ENCODE measurements at regions of chr17 and their contacts with region 1.

Region 1: DNA sequence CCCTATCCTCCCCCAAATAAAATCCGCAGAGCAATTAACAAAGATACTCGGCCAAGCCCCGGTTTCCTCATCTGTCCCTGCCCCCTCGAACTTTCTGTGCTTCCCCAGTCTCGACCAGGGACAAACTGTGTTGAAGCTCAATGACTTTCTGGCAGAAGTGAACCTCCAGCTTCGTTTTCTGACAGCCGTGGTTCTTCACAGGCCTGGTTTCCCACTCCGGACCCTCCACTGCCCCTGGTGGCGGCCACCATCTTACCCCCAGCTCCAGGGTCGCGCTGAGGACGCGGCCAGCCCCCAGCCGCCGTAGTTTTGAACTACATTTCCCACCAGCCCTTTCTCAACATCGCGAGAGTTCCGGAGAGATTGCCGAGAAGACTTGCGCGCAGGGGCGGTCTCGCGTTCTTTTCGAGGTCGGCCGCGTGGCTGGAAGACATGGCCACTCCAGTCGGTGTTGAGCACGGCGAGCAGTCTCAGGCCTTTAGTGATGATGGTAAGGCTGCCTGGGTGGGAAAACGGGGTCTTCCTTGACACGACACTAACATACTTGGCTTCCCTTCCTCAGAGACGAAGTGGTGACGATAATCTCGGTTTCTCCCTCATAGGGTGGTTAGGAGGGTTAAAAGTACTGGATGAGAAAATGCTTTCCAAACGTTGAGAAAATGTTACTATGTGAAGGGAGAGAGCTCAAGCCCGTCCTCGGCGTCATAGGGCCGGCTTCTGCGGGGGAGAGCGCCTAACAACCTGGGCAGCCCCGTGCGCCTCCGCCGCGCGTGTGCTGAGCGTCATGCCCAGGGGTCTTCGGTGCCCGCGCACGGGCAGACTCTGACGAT is 17.7 kb downstream of the PRCD start:
- DNase-seq: peak; percentile 98
- ATAC-seq: peak; percentile 95
- H3K4me3 ChIP-seq: peak overlapping the region; percentile 79 to 89 (median 86)
- H3K27ac ChIP-seq: peak overlapping the region; percentile 90
- H3K4me1 ChIP-seq: peaks cover 67% of the 10 kb centered on the region
- H3K27me3 ChIP-seq: no peaks in the 10 kb centered on the region; a peak in 1 of 5 replicates
- CTCF ChIP-seq: peak; percentile 88
- EP300 ChIP-seq: peak in 1 of 2 experiments; percentile 11; a peak in 1 of 4 replicates
- POLR2A ChIP-seq: peak; percentile 99 to 100
- RAD21 ChIP-seq: peak; percentile 64

Region 2: GRCh38 chr17:76523084-76524037 is 34.2 kb before region 1 on chr17:
- CTCF ChIA-PET with region 1: interaction called, 11 read pairs
- POLR2A ChIA-PET with region 1: interaction called, 50 read pairs
- in situ Hi-C with region 1: loop called (anchors 5 kb)
- intact Hi-C with region 1: no loop called
- DNase-seq: peak; percentile 53
- ATAC-seq: peak; percentile 58
- H3K4me3 ChIP-seq: peak overlapping the region in 1 of 3 experiments; percentile 64; a peak in 2 of 6 replicates
- H3K27ac ChIP-seq: no peak overlapping the region
- H3K4me1 ChIP-seq: peaks cover 85% of the 10 kb centered on the region
- H3K27me3 ChIP-seq: peaks cover 8 to 32% of the 10 kb centered on the region in 2 experiments
- CTCF ChIP-seq: peak; percentile 100
- EP300 ChIP-seq: no peak; a peak in 1 of 4 replicates
- POLR2A ChIP-seq: no peak
- RAD21 ChIP-seq: peak; percentile 100

Region 3: DNA sequence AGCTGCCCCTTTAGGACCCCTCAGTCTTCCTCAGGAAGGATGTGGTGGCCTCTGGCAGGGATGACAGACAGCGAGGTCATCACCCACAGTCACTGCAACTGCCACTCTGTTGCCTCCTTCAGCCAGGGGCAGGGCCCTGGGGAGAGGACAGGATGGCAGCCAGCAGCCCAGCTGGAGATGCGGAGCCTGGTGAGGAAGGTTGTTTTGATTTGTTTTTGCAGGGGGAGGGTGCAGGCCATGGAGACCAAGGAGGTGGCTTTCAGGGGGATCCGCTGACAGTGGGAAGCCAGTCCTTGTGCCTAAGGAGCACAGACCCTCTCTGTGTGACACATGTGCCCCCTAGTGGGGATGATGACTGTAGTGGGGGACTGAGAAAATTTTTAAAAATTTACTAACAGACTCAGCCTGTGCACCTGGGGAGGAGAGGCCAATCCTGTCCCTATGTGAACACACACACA is 10.4 kb before region 1 on chr17:
- CTCF ChIA-PET with region 1: no interaction called
- POLR2A ChIA-PET with region 1: interaction called, 16 read pairs
- in situ Hi-C with region 1: no loop called
- intact Hi-C with region 1: no loop called
- DNase-seq: peak; percentile 74
- ATAC-seq: peak; percentile 73
- H3K4me3 ChIP-seq: peak overlapping the region in 1 of 3 experiments; percentile 66; a peak in 1 of 6 replicates
- H3K27ac ChIP-seq: no peak overlapping the region
- H3K4me1 ChIP-seq: peaks cover 62% of the 10 kb centered on the region
- H3K27me3 ChIP-seq: no peaks in the 10 kb centered on the region
- CTCF ChIP-seq: peak; percentile 95
- EP300 ChIP-seq: no peak
- POLR2A ChIP-seq: no peak
- RAD21 ChIP-seq: peak; percentile 97

Region 4: DNA sequence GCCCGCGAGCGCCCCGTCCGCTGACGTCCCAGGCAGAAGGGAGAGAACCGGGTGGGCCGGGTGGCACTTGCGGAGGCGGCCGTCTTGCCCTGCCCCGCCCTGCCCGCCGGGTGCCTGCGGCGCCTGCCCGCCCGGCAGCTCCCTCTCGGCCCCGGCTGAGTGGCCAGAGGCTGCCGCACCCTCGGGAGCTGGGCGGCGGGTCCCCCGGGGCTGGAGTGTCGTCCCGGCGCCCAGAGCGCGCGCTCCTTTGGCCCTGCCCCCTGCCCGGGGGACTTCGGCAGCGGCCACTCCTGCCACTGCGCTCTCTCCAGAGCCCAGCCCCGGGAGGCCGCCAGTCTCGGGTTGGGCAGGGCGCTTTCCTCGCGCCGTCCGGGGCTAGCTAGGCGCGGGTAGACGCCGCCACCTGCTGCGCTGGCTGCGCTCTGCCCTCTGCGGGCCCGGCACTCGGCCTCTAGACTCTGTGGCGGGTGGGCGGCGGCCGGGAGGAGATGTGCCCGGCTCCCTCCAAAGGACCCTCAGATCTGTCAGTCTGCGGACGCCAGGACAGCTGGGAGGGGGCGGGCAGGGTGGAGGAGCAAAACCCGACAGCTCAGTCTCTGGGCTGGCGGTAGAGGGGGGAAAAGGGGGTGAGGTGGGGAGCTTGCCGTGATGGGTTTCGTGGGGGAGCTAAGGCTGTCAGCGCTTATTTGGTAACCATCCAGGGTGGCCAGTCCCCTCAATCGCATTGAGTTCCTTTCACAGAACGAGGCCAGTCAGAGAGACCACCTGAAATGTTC is 28.4 kb after region 1 on chr17 and contains the start of gene ST6GALNAC2:
- CTCF ChIA-PET with region 1: interaction called, 3 read pairs
- POLR2A ChIA-PET with region 1: interaction called, 19 read pairs
- in situ Hi-C with region 1: no loop called
- intact Hi-C with region 1: loop called (anchors 5 kb)
- DNase-seq: peak; percentile 66
- ATAC-seq: peak; percentile 93
- H3K4me3 ChIP-seq: peak within 1 kb of the TSS; percentile 55 to 72 (median 58)
- H3K27ac ChIP-seq: no peak within 1 kb of the TSS
- H3K4me1 ChIP-seq: peaks cover 53% of the 10 kb centered on the region
- H3K27me3 ChIP-seq: peaks cover 11 to 40% of the 10 kb centered on the region in 2 experiments; a peak in 4 of 5 replicates
- CTCF ChIP-seq: peak; percentile 90
- EP300 ChIP-seq: no peak
- POLR2A ChIP-seq: no peak
- RAD21 ChIP-seq: peak; percentile 98
- total RNA-seq, gene ST6GALNAC2: 0.49 and 0.84 TPM in 2 replicates

Region 5: DNA sequence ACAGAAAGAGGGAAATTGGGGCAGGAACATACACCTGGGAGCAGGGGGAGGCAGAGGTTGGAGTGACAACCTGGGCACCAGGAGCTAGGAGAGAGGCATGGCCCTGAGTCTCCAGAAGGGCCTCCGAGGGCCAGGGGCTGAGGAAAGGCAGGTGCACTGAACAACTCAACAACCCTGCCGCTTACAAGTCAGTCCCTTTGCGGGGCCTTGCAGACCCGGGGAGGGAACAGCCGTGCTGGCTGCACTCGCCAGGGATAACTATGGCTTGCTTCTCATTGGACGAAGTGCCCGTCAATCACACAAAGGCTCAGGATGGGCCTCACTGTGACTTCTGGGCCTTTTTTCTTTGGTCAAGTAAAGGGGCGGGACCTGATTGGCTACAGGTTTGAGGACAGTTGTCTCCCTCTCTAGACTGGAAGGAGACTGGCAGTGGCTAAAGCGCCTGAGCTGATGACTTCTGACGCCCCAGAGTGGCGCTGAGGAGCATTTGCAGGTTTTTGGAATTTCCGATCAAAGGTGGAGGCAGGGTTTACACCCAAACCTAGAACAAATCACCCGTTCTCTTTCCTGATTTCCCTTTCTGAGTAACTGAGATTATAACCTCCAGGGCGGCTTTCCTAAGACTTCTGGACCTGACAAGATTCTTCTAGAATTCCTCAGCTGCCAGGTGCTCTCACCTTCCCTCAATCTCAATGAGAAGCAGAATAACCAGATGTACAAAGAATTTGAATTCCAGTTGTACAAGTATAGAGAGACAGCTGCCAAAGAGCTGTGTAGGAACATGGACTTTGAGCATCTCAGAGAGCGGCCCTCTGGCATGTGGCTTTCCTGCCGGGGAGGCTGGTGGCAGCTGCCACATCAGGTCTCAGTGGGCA is 55.6 kb after region 1 on chr17:
- CTCF ChIA-PET with region 1: no interaction called
- POLR2A ChIA-PET with region 1: interaction called, 32 read pairs
- in situ Hi-C with region 1: no loop called
- intact Hi-C with region 1: loop called (anchors 5 kb)
- DNase-seq: peak; percentile 94
- ATAC-seq: peak; percentile 95
- H3K4me3 ChIP-seq: peak overlapping the region; percentile 17 to 70 (median 32)
- H3K27ac ChIP-seq: peak overlapping the region; percentile 57
- H3K4me1 ChIP-seq: peaks cover 34% of the 10 kb centered on the region
- H3K27me3 ChIP-seq: peaks cover 0 to 6% of the 10 kb centered on the region in 2 experiments; a peak in 1 of 5 replicates
- CTCF ChIP-seq: peak; percentile 71
- EP300 ChIP-seq: no peak
- POLR2A ChIP-seq: no peak
- RAD21 ChIP-seq: peak; percentile 57

Region 6: DNA sequence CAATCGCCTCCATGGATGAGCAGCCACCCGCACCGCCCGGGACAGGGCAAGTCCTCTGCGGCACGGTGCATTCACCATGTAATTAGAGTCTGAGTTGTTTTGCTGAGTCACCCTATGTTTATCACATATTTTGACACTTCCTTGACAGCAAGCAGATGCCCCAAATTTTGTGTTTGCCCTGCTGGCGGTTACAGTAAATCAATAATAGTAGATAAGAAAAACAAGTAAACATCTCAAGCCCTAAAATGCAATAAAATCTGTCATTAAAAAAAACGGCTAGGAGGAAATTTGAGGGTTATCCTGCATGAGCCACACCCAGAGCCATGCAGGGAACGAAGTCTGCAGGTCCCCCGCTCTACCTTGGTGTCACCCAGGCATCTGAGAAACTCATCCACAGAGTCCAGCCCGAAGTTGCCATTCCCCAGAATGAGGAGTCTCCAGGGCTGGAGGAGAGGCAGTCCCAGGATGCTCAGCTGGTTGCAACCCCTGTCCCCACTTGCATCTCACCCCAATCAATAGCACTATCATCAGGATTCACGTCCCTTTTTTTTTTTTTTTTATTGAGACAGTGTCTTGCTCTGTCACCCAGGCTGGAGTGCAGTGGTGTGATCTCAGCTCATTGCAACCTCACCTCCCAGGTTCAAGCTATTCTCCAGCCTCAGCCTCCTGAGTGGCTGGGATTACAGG is 102.5 kb after region 1 on chr17:
- CTCF ChIA-PET with region 1: no interaction called
- POLR2A ChIA-PET with region 1: no interaction called
- in situ Hi-C with region 1: no loop called
- intact Hi-C with region 1: no loop called
- DNase-seq: no peak
- ATAC-seq: peak; percentile 76
- H3K4me3 ChIP-seq: peak overlapping the region in 2 of 3 experiments; percentile 5 to 16; a peak in 2 of 6 replicates
- H3K27ac ChIP-seq: no peak overlapping the region
- H3K4me1 ChIP-seq: peaks cover 61% of the 10 kb centered on the region
- H3K27me3 ChIP-seq: no peaks in the 10 kb centered on the region
- CTCF ChIP-seq: no peak
- EP300 ChIP-seq: no peak
- POLR2A ChIP-seq: no peak
- RAD21 ChIP-seq: no peak

Region 7: DNA sequence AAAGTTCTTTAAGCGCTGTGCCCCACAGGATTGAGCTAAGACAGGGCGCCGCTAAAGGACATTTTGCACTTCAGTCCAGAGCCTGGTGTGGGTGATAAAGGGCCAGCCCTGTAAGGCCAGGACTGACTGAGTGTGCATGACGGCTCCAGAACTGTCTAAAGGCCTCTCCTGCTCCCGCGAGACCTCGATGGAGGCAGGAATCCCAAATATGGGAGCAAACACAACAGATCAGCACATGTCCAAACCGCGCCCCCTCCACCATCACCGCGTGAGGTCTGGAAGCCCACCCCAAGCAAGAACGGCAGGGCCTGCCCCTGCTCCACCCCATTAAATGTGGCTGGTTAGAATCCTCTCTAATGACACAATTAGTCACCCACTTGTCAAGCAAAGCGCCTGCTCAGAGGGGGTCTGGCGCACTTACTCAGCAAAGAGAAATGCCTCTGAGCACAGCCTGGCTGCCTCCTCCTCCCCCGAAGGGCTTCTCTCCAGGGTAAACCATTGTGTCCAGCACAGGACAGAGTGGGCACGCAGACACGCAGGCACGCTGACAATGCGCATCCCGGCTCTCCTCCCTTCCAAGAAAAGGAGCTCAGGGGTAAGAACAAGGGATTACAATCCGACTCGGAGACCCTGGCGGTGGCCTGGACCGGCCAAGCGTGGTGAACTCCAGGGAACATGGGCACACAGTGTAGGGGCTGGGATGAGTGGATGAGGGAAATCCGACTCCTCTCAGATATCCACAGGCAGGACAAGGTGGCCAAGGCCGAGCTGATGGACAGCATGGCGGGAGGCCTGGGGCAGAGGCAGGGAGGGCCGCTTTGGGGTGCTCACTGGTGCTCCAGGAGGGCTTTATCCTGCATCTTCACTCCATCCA is 151.7 kb after region 1 on chr17:
- CTCF ChIA-PET with region 1: no interaction called
- POLR2A ChIA-PET with region 1: interaction called, 4 read pairs
- in situ Hi-C with region 1: no loop called
- intact Hi-C with region 1: loop called (anchors 10 kb)
- DNase-seq: peak; percentile 41
- ATAC-seq: peak; percentile 34
- H3K4me3 ChIP-seq: peak overlapping the region; percentile 61 to 76 (median 73)
- H3K27ac ChIP-seq: no peak overlapping the region
- H3K4me1 ChIP-seq: peaks cover 45% of the 10 kb centered on the region
- H3K27me3 ChIP-seq: no peaks in the 10 kb centered on the region
- CTCF ChIP-seq: no peak
- EP300 ChIP-seq: no peak
- POLR2A ChIP-seq: peak in 1 of 2 experiments; percentile 20; a peak in 1 of 4 replicates
- RAD21 ChIP-seq: no peak

Measured in HepG2 (cell line).